Posterior cingulate gyrus (tissue), 11 donors: ENCODE measurements at regions of chr7 and their contacts with region 1.

Region 1: DNA sequence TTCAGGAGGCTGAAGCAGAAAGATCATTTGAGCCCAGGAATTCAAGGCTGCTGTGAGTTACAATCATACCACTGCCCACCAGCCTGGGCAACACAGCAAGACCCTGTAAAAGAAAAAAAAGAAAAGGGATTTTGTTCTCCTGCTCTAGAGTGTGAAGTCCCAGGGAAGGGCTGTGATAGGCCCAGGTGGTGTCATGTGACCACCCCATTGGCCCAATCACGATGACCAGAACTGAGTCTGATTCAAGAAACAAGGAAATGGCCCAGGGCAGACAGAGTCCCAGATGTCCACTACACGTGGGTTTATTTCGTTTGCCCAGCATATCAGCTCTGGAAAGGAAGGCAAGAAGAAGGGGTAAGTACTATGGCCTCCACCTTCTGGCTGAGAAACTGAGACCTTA is 81.3 kb upstream of the CUX1 start:
- DNase-seq: no peak

Region 2: DNA sequence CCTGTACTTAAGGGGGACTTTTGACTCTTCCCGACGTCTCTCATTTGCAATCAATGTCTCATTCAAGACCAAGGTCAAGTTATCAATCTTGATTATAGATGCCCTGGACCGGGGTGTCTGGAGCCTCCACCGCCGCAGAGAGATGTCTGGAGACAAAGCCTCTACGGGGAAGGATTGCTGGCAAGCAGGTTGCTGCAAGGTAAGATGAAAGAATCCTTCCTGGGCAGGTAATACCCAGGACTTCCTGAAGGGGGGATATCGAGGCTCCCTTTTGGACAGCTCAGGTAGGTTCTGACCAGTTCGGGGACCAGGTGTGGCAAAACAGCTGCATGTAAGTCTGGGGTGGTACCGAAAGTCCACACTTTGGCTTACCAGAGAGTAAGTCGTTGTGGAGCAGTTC is 68.9 kb after region 1 on chr7:
- intact Hi-C with region 1: loop called (anchors 1 kb)
- DNase-seq: peak in 1 of 10 donors; percentile 22